ENCODE measurements at regions of chr10 and their contacts with region 1.

Region 1: GRCh38 chr10:96642973-96643372 is 56.2 kb upstream of the TM9SF3 start:
- DNase-seq: peak; percentile 74
- H3K4me3 Mint-ChIP-seq: no peak overlapping the region
- H3K27ac Mint-ChIP-seq: no peak overlapping the region
- H3K4me1 Mint-ChIP-seq: peaks cover 16% of the 10 kb centered on the region
- H3K27me3 Mint-ChIP-seq: no peaks in the 10 kb centered on the region
- CTCF ChIP-seq: no peak

Region 2: DNA sequence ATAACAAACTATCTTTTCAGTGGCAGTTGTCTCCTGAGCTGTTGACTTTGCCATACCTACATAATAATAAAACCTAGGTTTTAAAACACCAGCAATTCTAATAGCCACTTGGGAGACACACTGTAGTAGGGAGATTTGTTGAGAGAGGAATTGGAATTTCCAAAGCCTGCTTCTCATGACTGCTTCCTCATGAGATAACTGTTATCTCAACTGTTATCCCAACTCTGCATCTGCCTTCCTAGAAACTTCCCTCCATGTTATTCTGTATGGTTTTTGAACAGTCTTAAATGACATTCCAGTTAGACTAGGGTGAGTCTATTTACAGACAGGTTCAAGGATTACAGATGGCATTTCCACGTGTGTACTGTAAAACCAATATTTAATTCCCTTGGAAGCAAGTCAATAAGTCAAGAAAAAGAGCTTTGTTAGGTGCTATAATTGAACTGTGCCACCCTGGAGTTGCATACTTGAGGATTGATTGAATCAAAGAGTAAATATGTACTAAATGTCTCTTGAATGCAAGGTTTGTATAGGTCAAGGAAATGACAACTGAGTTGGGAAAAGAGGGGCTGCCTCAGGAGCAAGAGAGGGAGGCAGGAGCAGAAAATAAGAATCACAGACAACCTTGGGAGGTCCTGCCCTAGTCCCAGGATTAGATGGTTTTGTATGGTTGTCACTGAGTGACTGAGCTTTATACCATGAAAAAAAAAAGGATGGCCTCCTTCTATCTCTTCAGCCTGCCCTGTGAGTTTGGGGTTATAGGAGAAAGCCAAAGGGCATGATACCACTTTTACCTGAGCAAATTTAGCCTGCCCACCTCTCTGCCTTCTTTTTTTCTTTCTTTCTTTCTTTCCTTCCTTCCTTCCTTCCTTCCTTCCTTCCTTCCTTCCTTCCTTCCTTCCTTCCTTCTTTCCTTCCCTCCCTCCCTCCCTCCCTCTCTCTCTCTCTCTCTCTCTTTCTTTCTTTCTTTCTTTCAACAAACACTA is 46.3 kb before region 1 on chr10:
- CTCF ChIA-PET with region 1: no interaction called
- intact Hi-C with region 1: no loop called
- DNase-seq: no peak
- H3K4me3 Mint-ChIP-seq: no peak overlapping the region
- H3K27ac Mint-ChIP-seq: peak overlapping the region; percentile 60
- H3K4me1 Mint-ChIP-seq: peaks cover 13% of the 10 kb centered on the region
- H3K27me3 Mint-ChIP-seq: no peaks in the 10 kb centered on the region
- CTCF ChIP-seq: no peak

Region 3: GRCh38 chr10:96719850-96720421 is 77.0 kb after region 1 on chr10:
- CTCF ChIA-PET with region 1: interaction called, 10 read pairs
- intact Hi-C with region 1: loop called (anchors 2 kb)
- DNase-seq: peak; percentile 86
- H3K4me3 Mint-ChIP-seq: peak overlapping the region; percentile 83
- H3K27ac Mint-ChIP-seq: peak overlapping the region; percentile 53
- H3K4me1 Mint-ChIP-seq: peaks cover 32% of the 10 kb centered on the region
- H3K27me3 Mint-ChIP-seq: no peaks in the 10 kb centered on the region
- CTCF ChIP-seq: peak; percentile 42

Region 4: GRCh38 chr10:96743988-96744585 is 101.1 kb after region 1 on chr10:
- CTCF ChIA-PET with region 1: interaction called, 4 read pairs
- intact Hi-C with region 1: loop called (anchors 1 kb)
- DNase-seq: no peak
- H3K4me3 Mint-ChIP-seq: no peak overlapping the region
- H3K27ac Mint-ChIP-seq: no peak overlapping the region
- H3K4me1 Mint-ChIP-seq: peaks cover 23% of the 10 kb centered on the region
- H3K27me3 Mint-ChIP-seq: no peaks in the 10 kb centered on the region
- CTCF ChIP-seq: no peak

Region 5: DNA sequence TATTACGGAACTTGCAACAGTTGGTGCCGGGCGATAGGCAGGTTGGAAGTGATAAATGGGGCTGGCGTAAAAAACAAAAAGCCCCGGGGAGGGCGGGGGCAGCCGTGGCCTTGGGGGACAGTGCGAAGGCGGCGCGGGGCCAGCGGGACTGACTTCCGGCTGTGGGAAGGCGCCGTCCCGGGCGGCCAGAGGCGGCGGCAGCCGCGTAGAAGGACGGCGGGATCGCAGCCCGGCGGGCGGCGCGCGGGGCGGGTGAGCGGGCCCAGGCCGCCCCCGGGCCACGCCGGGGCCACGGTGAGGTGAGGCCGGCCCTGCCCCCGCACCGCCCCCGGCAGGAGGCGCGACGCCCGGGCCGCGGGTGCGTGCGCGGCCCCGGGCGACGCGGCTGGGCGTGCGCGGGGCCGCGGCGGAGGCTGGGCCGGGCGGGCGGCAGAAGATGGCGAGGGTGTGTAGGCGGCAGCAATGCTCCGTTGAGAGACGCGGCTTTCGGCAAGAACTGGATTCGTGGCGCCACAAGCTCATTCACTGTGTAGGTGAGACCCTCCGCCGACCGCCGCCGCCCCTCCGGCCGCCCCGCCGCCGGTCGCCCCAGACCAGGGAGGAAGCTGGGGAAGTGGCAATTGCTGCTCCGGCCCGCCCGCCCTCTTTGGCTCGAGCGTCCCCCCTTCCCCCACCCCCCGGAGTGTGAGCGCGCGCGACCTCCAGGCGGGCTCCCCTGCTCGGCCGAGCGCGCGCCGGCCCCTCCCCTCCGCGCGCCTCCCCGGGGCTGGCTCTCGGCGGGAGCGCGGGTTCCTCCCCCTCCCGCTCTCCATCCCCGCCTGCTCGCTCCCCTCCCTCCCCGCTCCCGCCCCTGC is 189.1 kb after region 1 on chr10 and contains the start of gene LCOR:
- CTCF ChIA-PET with region 1: interaction called, 3 read pairs
- intact Hi-C with region 1: loop called (anchors 5 kb)
- DNase-seq: peak; percentile 85
- H3K4me3 Mint-ChIP-seq: peak within 1 kb of the TSS; percentile 92
- H3K27ac Mint-ChIP-seq: peak within 1 kb of the TSS; percentile 96
- H3K4me1 Mint-ChIP-seq: peaks cover 22% of the 10 kb centered on the region
- H3K27me3 Mint-ChIP-seq: no peaks in the 10 kb centered on the region
- CTCF ChIP-seq: no peak
- total RNA-seq, gene LCOR: 50.1 and 52.8 TPM in 2 replicates

Region 6: DNA sequence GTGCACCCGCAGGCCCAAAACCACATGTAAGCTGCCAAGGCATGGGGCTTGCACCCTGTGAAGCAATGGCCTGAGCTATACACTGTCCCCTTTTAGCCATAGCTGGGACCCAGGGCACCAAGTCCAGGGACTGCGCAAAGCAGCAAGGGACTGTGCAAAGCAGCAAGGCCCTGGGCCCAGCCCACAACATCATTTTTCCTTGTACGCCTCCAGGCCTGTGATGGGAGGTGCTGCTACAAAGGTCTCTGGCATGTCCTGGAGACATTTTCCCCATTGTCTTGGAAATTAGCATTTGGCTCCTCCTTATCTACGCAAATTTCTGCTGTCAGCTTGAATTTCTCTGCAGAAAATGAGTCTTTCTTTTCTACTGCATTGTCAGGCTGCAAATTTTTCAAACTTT is 624.7 kb after region 1 on chr10:
- CTCF ChIA-PET with region 1: no interaction called
- intact Hi-C with region 1: no loop called
- DNase-seq: no peak
- H3K4me3 Mint-ChIP-seq: no peak overlapping the region
- H3K27ac Mint-ChIP-seq: no peak overlapping the region
- H3K4me1 Mint-ChIP-seq: no peaks in the 10 kb centered on the region
- H3K27me3 Mint-ChIP-seq: no peaks in the 10 kb centered on the region
- CTCF ChIP-seq: no peak